Cardiac septum (tissue), 1 donor: ENCODE measurements at regions of chr20 and their contacts with region 1.

Region 1: GRCh38 chr20:46752728-46753127 is 43.3 kb downstream of the SLC2A10 start:
- DNase-seq: no peak

Region 2: GRCh38 chr20:47150403-47151152 is 397.9 kb after region 1 on chr20:
- intact Hi-C with region 1: loop called (anchors 5 kb)
- DNase-seq: peak; percentile 78